ENCODE measurements at regions of chr16 and their contacts with region 1.

Region 1: DNA sequence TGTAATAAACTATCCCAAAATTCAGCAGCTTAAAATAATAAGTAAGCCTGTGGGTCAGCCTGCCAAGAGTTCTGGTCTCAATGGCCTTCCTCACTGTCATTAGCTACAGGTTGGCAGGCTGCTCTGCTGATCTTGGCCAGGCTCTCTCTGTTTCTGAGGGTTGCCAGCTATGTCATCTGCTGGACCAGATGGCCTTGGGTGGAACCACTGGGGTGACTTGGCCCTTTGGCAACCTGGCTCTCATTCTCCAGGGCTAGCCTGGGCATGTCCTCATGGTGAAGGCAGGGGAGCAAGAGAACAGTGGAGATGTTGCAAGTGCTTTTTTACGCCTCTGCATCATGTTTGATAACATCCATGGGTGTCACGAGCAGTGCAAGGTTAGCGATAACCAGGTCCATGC is 13.9 kb downstream of the ITGAM start:
- DNase-seq: no peak
- H3K4me3 ChIP-seq: no peak overlapping the region
- H3K27ac ChIP-seq: no peak overlapping the region
- H3K4me1 ChIP-seq: peaks cover 0 to 5% (median 0%) of the 10 kb centered on the region in 4 experiments; a peak in 1 of 7 replicates
- H3K27me3 ChIP-seq: 0 out of 7 replicates have a peak, but pooled peaks cover 0 to 2% (median 0%) of the 10 kb centered on the region in 4 experiments
- CTCF ChIP-seq: no peak
- EP300 ChIP-seq: no peak
- POLR2A ChIP-seq: no peak
- RAD21 ChIP-seq: no peak

Region 2: DNA sequence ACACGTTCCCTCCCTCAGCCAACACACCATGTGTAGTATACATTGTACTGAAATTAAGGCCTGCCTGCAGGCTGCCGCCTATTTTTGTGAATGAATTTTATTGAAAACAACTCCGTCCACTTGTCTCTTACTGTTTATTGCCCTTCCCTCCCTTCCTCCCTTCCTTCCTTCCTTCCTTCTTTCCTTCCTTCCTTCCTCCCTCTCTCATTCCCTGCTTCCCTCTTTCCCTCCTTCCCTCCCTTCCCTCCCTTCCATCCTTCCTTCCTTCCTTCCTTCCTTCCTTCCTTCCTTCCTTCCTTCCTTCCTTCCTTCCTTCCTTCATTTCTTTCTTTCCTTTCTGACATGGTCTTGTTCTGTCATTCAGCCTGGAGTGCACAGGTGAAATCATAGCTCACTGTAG is 11.6 kb before region 1 on chr16:
- CTCF ChIA-PET with region 1: interaction called, 10 read pairs
- POLR2A ChIA-PET with region 1: no interaction called
- DNase-seq: no peak
- H3K4me3 ChIP-seq: no peak overlapping the region
- H3K27ac ChIP-seq: no peak overlapping the region
- H3K4me1 ChIP-seq: peaks cover 0 to 5% (median 2%) of the 10 kb centered on the region in 4 experiments; a peak in 3 of 7 replicates
- H3K27me3 ChIP-seq: no peaks in the 10 kb centered on the region
- CTCF ChIP-seq: no peak
- EP300 ChIP-seq: no peak
- POLR2A ChIP-seq: no peak
- RAD21 ChIP-seq: no peak

Region 3: DNA sequence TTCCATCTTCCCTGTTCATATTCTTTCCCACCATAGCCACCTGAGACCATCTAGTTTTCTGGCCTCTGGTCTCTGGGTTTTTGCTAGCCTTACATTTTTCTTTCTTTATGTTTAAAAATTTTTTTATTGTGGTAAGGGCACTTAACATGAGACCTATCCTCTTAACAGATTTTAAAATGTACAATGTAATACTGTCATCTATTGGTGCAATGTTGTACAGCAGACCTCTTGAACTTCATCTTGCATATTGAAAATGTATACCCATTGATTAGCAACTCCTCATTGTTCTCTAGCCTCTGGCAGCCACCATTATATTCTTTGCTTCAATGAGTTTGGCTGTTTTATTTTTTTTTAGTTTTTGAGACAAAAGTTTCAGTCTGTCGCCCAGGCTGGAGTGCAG is 25.3 kb after region 1 on chr16:
- CTCF ChIA-PET with region 1: no interaction called
- POLR2A ChIA-PET with region 1: no interaction called
- DNase-seq: no peak
- H3K4me3 ChIP-seq: no peak overlapping the region
- H3K27ac ChIP-seq: no peak overlapping the region
- H3K4me1 ChIP-seq: no peaks in the 10 kb centered on the region
- H3K27me3 ChIP-seq: no peaks in the 10 kb centered on the region
- CTCF ChIP-seq: peak in 1 of 3 experiments; percentile 12; a peak in 1 of 4 replicates
- EP300 ChIP-seq: no peak
- POLR2A ChIP-seq: no peak
- RAD21 ChIP-seq: peak in 1 of 2 experiments; percentile 27; a peak in 3 of 4 replicates